ENCODE measurements at regions of chr18 and their contacts with region 1.

Region 1: DNA sequence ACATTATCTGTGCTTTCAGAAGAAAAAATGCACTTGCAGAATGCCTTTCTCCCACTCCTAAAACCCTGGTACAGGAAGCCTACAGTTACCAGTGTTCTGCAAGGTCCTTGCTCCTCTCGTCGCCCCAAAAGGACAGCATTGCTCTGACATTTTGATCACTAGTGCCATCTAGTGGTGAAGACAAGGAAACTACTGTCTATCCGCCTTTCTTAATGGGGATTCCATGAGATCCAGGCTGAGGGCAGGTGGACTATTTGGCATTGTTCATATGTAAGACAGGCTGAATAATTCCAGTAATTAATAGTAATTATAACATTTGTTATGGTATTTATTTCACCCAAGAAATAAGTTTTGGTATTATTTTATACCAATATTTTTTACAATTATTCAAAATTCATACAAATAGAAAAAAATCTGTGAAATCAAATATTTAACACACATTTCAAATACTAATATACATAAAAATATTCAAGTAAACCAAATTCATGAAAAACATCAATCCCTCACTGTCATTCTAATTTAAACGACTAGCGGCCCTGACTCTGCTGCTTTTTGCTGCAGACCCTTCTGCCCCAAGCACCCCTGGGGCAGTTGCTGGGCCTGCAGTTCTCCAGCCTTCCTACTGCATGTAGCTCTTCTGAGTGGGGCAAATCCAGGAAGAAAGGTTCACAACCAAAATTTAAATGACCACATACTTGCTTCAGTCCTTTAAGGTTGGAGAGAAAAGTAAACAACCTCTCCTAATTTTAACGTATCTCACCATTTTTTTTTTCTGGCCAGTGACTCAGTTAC is 19.0 kb downstream of the TPGS2 start:
- DNase-seq: no peak
- H3K4me3 ChIP-seq: no peak overlapping the region
- H3K27ac ChIP-seq: no peak overlapping the region
- H3K4me1 ChIP-seq: no peaks in the 10 kb centered on the region
- H3K27me3 ChIP-seq: no peaks in the 10 kb centered on the region
- CTCF ChIP-seq: peak; percentile 66 to 83 (median 68)

Region 2: GRCh38 chr18:36688020-36688965 is 121.5 kb before region 1 on chr18:
- intact Hi-C with region 1: loop called (anchors 5 kb)
- DNase-seq: peak in 1 of 2 donors; percentile 74
- H3K4me3 ChIP-seq: no peak overlapping the region
- H3K27ac ChIP-seq: no peak overlapping the region
- H3K4me1 ChIP-seq: peaks cover 0 to 6% of the 10 kb centered on the region in 2 donors
- H3K27me3 ChIP-seq: no peaks in the 10 kb centered on the region
- CTCF ChIP-seq: peak; percentile 53 to 87 (median 68)

Region 3: GRCh38 chr18:36769611-36770314 is 40.0 kb before region 1 on chr18:
- intact Hi-C with region 1: loop called (anchors 1 kb)
- DNase-seq: no peak
- H3K4me3 ChIP-seq: no peak overlapping the region
- H3K27ac ChIP-seq: no peak overlapping the region
- H3K4me1 ChIP-seq: peaks cover 0 to 6% of the 10 kb centered on the region in 2 donors
- H3K27me3 ChIP-seq: no peaks in the 10 kb centered on the region
- CTCF ChIP-seq: peak in 2 of 3 experiments; percentile 24 to 40

Region 4: GRCh38 chr18:36786686-36787085 is 23.1 kb before region 1 on chr18:
- intact Hi-C with region 1: loop called (anchors 2 kb)
- DNase-seq: peak in 1 of 2 donors; percentile 86
- H3K4me3 ChIP-seq: no peak overlapping the region
- H3K27ac ChIP-seq: peak overlapping the region; percentile 58 to 83
- H3K4me1 ChIP-seq: peaks cover 3 to 22% of the 10 kb centered on the region in 2 donors
- H3K27me3 ChIP-seq: no peaks in the 10 kb centered on the region
- CTCF ChIP-seq: no peak

Region 5: GRCh38 chr18:36889321-36889720 is 79.5 kb after region 1 on chr18:
- intact Hi-C with region 1: no loop called
- DNase-seq: no peak
- H3K4me3 ChIP-seq: no peak overlapping the region
- H3K27ac ChIP-seq: peak overlapping the region; percentile 37 to 76
- H3K4me1 ChIP-seq: peaks cover 0 to 24% of the 10 kb centered on the region in 2 donors
- H3K27me3 ChIP-seq: no peaks in the 10 kb centered on the region
- CTCF ChIP-seq: no peak

Region 6: GRCh38 chr18:37179384-37179783 is 369.6 kb after region 1 on chr18:
- intact Hi-C with region 1: no loop called
- DNase-seq: no peak
- H3K4me3 ChIP-seq: no peak overlapping the region
- H3K27ac ChIP-seq: no peak overlapping the region
- H3K4me1 ChIP-seq: no peaks in the 10 kb centered on the region
- H3K27me3 ChIP-seq: no peaks in the 10 kb centered on the region
- CTCF ChIP-seq: no peak

Measured in ascending aorta (tissue), 2 donors.